Psoas muscle (tissue), 8 donors: ENCODE measurements at regions of chr6 and their contacts with region 1.

Region 1: DNA sequence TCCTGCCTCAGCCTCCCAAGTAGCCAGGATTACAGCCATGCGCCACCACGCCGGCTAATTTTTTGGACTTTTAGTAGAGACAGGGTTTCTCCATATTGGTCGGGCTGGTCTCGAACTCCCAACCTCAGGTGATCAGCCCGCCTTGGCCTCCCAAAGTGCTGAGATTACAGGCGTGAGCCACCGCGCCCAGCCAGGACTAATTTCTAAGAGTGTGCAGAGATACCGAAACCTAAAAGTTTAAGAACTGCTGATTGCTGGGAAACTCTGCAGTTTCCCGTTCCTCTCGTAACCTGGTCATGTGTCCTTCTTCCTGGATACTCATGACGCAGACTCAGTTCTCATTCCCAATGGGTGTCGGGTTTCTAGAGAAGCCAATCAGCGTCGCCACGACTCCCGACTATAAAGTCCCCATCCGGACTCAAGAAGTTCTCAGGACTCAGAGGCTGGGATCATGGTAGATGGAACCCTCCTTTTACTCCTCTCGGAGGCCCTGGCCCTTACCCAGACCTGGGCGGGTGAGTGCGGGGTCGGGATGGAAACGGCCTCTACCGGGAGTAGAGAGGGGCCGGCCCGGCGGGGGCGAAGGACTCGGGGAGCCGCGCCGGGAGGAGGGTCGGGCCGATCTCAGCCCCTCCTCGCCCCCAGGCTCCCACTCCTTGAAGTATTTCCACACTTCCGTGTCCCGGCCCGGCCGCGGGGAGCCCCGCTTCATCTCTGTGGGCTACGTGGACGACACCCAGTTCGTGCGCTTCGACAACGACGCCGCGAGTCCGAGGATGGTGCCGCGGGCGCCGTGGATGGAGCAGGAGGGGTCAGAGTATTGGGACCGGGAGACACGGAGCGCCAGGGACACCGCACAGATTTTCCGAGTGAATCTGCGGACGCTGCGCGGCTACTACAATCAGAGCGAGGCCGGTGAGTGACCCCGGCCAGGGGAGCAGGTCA is at the start of gene HLA-E:
- DNase-seq: peak; percentile 82 to 91
- ATAC-seq: peak; percentile 89 to 98 (median 93)
- H3K4me3 ChIP-seq: peak within 1 kb of the TSS; percentile 71
- H3K27ac ChIP-seq: peak within 1 kb of the TSS; percentile 79
- H3K4me1 ChIP-seq: no peaks in the 10 kb centered on the region
- H3K27me3 ChIP-seq: peaks cover 0 to 44% (median 0%) of the 10 kb centered on the region in 3 donors
- CTCF ChIP-seq: no peak
- total RNA-seq, gene HLA-E: 85.1 to 152 (median 92.4) TPM

Region 2: GRCh38 chr6:30295837-30296236 is 193.5 kb before region 1 on chr6:
- intact Hi-C with region 1: no loop called
- DNase-seq: no peak
- ATAC-seq: no peak
- H3K4me3 ChIP-seq: no peak overlapping the region
- H3K27ac ChIP-seq: no peak overlapping the region
- H3K4me1 ChIP-seq: no peaks in the 10 kb centered on the region
- H3K27me3 ChIP-seq: no peaks in the 10 kb centered on the region
- CTCF ChIP-seq: no peak

Region 3: DNA sequence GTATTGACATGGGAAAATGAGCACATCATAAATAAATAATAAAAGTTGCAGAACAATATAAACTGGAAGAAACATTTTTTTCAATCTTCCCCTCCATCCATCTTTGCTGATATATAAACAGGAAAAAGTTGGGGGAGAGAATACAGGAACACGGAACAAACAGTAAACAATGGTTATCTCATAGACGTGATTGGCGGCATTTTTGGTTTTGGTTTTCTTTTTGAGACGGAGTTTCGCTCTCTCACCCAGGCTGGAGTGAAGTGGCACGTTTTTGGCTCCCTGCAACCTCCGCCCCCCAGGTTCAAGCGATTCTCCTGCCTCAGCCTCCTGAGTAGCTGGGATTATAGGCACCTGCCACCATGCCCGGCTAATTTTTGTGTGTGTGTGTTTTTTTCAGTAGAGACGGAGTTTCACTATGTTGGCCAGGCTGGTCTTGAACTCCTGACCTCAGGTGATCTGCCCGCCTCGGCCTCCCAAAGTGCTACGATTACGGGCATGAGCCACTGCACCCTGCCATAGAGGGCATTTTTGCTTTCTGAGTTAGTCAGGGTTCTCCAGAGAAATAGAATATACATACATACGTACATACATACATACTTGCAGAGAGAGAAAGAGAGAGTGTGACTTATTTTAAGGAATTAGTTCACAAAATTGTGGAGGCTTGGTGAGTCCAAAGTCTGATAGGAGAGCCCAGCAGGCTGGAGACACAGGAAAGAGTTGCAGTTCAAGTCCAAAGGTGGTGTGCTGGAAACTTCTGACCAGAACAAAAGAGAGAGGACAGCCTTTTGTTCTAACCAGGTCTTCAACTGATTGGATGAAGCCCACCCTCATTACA is 44.3 kb after region 1 on chr6:
- intact Hi-C with region 1: loop called in 1 of 2 experiments (anchors 5 kb)
- DNase-seq: no peak
- ATAC-seq: no peak
- H3K4me3 ChIP-seq: no peak overlapping the region
- H3K27ac ChIP-seq: no peak overlapping the region
- H3K4me1 ChIP-seq: no peaks in the 10 kb centered on the region
- H3K27me3 ChIP-seq: no peaks in the 10 kb centered on the region
- CTCF ChIP-seq: no peak

Region 4: DNA sequence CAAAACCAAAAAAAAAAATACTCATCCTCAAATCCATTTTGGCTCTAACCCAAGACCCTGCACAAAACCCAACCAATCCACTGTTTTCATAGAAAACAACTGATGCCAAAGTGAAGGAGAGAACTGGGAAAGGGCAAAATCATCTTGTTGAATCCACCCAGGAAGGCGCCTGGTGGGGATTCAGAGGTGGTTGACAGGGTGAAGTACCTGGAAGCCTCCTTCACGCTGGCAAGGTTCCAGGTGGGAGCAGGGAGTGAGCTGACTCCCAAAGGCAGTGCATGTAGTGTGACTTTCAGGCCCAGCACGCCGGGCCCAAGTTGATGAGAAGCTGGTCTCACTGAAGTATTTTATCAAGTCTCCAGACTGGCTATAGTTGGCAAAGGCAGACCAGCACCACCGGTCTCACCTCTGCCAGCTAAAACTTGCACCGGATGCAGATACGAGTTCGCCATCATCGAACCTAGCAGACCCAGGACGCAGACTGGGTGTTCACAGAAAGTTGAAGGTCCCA is 111.2 kb after region 1 on chr6:
- intact Hi-C with region 1: loop called (anchors 2 to 10 kb)
- DNase-seq: no peak
- ATAC-seq: peak in 1 of 4 donors; percentile 18
- H3K4me3 ChIP-seq: no peak overlapping the region
- H3K27ac ChIP-seq: no peak overlapping the region
- H3K4me1 ChIP-seq: no peaks in the 10 kb centered on the region
- H3K27me3 ChIP-seq: no peaks in the 10 kb centered on the region
- CTCF ChIP-seq: no peak